Natural killer cell (primary cell): ENCODE measurements at regions of chr7 and their contacts with region 1.

Region 1: DNA sequence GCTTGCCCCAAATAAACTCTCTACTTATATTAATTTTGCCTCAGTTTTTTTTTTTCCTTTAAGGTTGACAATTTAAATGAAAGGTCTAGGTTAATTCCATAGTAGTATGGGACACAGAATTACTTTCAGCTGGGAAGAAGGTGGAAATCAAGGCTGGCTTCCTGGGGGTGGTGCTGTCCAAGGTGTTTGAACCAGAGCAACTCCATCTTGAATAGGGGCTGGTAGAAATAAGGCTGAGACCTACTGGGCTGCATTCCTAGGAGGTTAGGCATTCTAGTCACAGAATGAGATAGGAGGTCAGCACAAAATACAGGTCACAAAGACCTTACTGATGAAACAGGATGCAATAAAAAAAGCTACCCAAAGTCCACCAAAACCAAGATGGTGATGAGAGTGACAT is 1190.8 kb upstream of the AUTS2 start:
- DNase-seq: no peak
- ATAC-seq: no peak
- H3K4me3 ChIP-seq: no peak overlapping the region
- H3K4me3 Mint-ChIP-seq: no peak overlapping the region
- H3K27ac ChIP-seq: no peak overlapping the region
- H3K27ac Mint-ChIP-seq: no peak overlapping the region
- H3K4me1 ChIP-seq: no peaks in the 10 kb centered on the region
- H3K4me1 Mint-ChIP-seq: no peaks in the 10 kb centered on the region
- H3K27me3 ChIP-seq: no peaks in the 10 kb centered on the region
- H3K27me3 Mint-ChIP-seq: no peaks in the 10 kb centered on the region
- CTCF ChIP-seq: no peak

Region 2: DNA sequence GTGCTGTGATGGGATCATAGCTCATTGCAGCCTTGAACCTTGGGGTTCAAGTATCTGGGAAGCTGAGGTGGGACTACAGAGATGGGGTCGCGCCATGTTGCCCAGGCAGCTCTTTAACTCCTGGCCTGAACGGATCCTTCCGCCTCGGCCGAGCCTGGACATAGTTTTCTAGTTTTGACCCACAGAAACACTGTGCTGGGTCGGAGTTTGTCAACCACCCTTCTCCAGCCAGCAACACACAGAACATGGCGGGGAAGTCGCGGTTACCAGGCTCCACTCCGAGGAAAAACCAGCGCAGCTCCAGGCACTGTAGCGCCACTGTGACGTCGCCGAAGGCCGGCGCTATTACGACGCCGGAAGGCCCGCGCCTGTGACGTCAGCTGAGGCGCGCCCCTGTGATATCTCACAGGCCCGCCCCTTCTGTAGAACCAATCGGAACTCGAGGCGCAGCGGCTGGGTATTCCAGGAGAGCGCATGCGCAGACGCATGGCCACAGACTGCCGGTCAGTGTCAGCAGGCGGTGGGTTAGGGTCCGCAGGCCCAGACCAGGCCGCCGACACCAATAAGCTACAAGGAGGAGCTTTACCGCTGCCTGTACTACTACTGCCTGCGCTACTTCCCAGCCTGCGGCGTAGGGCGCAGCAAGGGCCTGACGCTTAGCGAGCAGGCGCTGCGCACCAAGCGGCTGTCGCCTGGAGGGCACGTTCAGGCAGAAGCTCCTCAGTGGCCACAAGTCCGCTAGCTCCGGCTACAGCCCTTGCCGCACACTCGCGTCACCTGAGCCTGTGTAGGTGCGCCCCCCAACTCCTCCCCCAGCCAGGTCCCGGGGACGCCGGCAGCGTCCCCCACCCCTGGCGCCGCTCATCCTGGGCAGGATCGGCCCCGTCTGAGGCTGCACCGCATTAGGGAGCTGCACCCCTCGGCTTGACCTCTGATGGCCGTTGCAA is 1914.0 kb before region 1 on chr7:
- intact Hi-C with region 1: no loop called
- DNase-seq: peak; percentile 94 to 99
- ATAC-seq: peak; percentile 92 to 98 (median 93)
- H3K4me3 ChIP-seq: peak overlapping the region; percentile 71
- H3K4me3 Mint-ChIP-seq: peak overlapping the region; percentile 90
- H3K27ac ChIP-seq: peak overlapping the region; percentile 92
- H3K27ac Mint-ChIP-seq: peak overlapping the region; percentile 98
- H3K4me1 ChIP-seq: peaks cover 17% of the 10 kb centered on the region
- H3K4me1 Mint-ChIP-seq: peaks cover 9 to 16% of the 10 kb centered on the region in 2 donors
- H3K27me3 ChIP-seq: no peaks in the 10 kb centered on the region
- H3K27me3 Mint-ChIP-seq: no peaks in the 10 kb centered on the region
- CTCF ChIP-seq: peak; percentile 27

Region 3: GRCh38 chr7:68461430-68461829 is 54.0 kb after region 1 on chr7:
- intact Hi-C with region 1: loop called (anchors 10 kb)
- DNase-seq: no peak
- ATAC-seq: no peak
- H3K4me3 ChIP-seq: no peak overlapping the region
- H3K4me3 Mint-ChIP-seq: no peak overlapping the region
- H3K27ac ChIP-seq: no peak overlapping the region
- H3K27ac Mint-ChIP-seq: no peak overlapping the region
- H3K4me1 ChIP-seq: no peaks in the 10 kb centered on the region
- H3K4me1 Mint-ChIP-seq: no peaks in the 10 kb centered on the region
- H3K27me3 ChIP-seq: no peaks in the 10 kb centered on the region
- H3K27me3 Mint-ChIP-seq: no peaks in the 10 kb centered on the region
- CTCF ChIP-seq: no peak